AG04449 (cell line): ENCODE measurements at regions of chr6 and their contacts with region 1.

Region 1: GRCh38 chr6:100001915-100002388 is 7.9 kb upstream of the MCHR2 start:
- DNase-seq: peak; percentile 16
- H3K4me3 ChIP-seq: no peak overlapping the region
- CTCF ChIP-seq: peak; percentile 88

Region 2: DNA sequence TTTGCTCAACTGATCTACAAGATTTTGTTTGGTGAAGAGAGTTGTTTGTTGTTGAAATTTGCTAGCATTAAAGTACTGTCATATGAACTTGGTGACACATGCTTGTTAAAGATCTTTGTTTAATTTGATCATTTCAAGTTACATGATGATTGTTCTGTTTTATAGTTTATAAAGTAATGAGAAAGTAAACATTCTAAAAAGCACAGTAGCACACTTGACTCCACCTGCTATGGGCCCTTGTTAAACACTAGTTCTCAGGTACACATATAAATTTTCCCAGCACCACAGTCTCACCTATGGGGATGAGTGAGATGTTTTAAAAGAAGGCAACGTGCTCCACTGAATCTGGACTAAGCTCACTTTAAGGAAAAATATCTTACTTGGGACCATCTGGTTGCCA is 22.0 kb before region 1 on chr6:
- CTCF ChIA-PET with region 1: interaction called, 18 read pairs
- POLR2A ChIA-PET with region 1: no interaction called
- DNase-seq: no peak
- H3K4me3 ChIP-seq: no peak overlapping the region
- CTCF ChIP-seq: no peak

Region 3: DNA sequence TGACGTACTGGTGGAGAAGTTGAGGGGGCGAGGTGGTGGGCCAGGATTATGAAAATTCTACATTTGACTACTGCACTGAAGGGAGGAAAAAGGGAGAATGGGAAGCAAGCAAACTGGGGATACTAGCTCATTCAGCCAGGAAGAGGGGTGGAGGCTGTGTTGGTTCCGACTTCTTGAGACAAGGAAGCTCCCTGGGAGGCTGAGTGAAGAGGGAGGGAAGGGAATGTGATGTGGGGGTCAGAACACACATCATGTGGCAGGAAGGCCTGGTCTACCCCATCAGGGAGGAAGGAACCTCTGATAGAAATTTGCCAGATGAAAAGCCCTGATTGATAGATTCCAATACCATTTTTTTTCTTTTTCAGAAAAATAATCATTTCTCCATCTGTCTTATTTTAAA is 20.9 kb after region 1 on chr6:
- CTCF ChIA-PET with region 1: interaction called, 12 read pairs
- POLR2A ChIA-PET with region 1: no interaction called
- DNase-seq: no peak
- H3K4me3 ChIP-seq: no peak overlapping the region
- CTCF ChIP-seq: no peak

Region 4: GRCh38 chr6:100664274-100665040 is 662.5 kb after region 1 on chr6:
- CTCF ChIA-PET with region 1: interaction called, 18 read pairs
- POLR2A ChIA-PET with region 1: no interaction called
- DNase-seq: no peak
- H3K4me3 ChIP-seq: no peak overlapping the region
- CTCF ChIP-seq: peak; percentile 37